Posterior vena cava (tissue), 2 donors: ENCODE measurements at regions of chr12 and their contacts with region 1.

Region 1: GRCh38 chr12:117172168-117172567 is 18.1 kb downstream of the FBXO21 start:
- DNase-seq: no peak

Region 2: GRCh38 chr12:117143008-117143532 is 29.1 kb before region 1 on chr12:
- intact Hi-C with region 1: loop called in 1 of 2 experiments (anchors 1 kb)
- DNase-seq: peak; percentile 74